Naive thymus-derived CD4-positive, alpha-beta T cell (primary cell): ENCODE measurements at regions of chr2 and their contacts with region 1.

Region 1: GRCh38 chr2:173965329-173966025 is at the start of gene SP3:
- DNase-seq: peak; percentile 88 to 97 (median 94)
- ATAC-seq: peak; percentile 75
- H3K4me3 ChIP-seq: peak within 1 kb of the TSS; percentile 88
- H3K4me3 Mint-ChIP-seq: peak within 1 kb of the TSS; percentile 91 to 99 (median 96)
- H3K27ac ChIP-seq: peak within 1 kb of the TSS; percentile 96
- H3K27ac Mint-ChIP-seq: peak within 1 kb of the TSS; percentile 97 to 100 (median 99)
- H3K4me1 ChIP-seq: peaks cover 13 to 25% of the 10 kb centered on the region in 2 donors
- H3K4me1 Mint-ChIP-seq: peaks cover 22 to 38% (median 31%) of the 10 kb centered on the region in 7 donors
- H3K27me3 ChIP-seq: no peaks in the 10 kb centered on the region
- H3K27me3 Mint-ChIP-seq: peaks cover 0 to 2% (median 0%) of the 10 kb centered on the region in 5 donors
- total RNA-seq, gene SP3: 108 to 158 (median 131) TPM

Region 2: DNA sequence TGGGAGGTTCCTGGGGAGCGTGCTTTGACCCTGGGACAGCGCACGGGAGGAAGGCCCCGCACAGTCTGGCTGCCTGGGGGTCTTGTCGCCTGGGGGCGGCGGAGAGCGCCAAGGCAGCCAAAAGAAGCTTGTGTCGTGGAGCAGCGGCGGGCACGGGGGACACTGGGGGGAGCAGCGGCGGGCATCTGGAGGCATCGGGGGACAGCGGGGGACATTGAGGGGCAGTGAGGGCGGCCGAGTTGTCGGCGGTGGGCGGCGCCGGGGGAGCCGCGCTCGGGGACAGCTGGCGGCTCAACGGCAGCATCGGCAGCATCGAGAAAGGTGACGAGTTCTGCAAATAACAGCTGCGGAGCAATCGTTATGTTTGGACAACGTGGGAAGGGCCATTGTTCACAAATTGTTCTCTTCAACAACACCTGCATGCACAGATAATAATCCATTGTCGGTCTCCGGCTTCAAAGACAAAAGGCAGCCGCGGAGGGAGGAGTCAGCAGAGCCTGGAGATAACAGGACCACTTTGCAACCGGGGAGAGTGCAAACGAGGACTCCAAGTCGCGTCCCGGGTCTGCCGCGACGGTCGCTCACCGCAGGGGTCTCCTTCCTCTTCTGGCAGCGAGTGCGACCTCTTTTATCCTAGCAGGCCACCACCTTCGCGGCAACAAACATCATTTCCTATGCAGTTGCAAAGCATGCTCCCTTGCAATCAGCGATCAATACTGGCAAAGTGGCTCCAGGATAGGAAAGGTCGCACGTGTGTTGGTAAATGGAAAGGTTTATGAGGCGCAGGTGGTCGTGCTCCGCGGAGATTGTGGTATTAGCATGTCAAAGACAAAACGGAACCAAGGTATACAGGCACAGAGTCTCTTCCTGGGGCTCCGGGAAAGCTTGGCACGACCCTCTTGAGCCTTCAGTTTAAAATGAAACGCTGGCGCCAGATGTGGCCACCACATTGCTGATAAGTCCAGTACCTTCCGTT is 1730.5 kb before region 1 on chr2:
- CTCF ChIA-PET with region 1: no interaction called
- POLR2A ChIA-PET with region 1: no interaction called
- intact Hi-C with region 1: loop called in 1 of 2 experiments (anchors 5 kb)
- DNase-seq: peak in 7 of 9 donors; percentile 18 to 51 (median 38)
- ATAC-seq: peak; percentile 68
- H3K4me3 ChIP-seq: peak overlapping the region; percentile 71
- H3K4me3 Mint-ChIP-seq: peak overlapping the region; percentile 82 to 97 (median 92)
- H3K27ac ChIP-seq: no peak overlapping the region
- H3K27ac Mint-ChIP-seq: peak overlapping the region in 6 of 9 donors; percentile 11 to 88 (median 60)
- H3K4me1 ChIP-seq: peaks cover 0 to 15% of the 10 kb centered on the region in 2 donors
- H3K4me1 Mint-ChIP-seq: peaks cover 14 to 25% (median 20%) of the 10 kb centered on the region in 7 donors
- H3K27me3 ChIP-seq: peaks cover 4 to 13% of the 10 kb centered on the region in 2 donors
- H3K27me3 Mint-ChIP-seq: peaks cover 4 to 72% (median 21%) of the 10 kb centered on the region in 5 donors

Region 3: DNA sequence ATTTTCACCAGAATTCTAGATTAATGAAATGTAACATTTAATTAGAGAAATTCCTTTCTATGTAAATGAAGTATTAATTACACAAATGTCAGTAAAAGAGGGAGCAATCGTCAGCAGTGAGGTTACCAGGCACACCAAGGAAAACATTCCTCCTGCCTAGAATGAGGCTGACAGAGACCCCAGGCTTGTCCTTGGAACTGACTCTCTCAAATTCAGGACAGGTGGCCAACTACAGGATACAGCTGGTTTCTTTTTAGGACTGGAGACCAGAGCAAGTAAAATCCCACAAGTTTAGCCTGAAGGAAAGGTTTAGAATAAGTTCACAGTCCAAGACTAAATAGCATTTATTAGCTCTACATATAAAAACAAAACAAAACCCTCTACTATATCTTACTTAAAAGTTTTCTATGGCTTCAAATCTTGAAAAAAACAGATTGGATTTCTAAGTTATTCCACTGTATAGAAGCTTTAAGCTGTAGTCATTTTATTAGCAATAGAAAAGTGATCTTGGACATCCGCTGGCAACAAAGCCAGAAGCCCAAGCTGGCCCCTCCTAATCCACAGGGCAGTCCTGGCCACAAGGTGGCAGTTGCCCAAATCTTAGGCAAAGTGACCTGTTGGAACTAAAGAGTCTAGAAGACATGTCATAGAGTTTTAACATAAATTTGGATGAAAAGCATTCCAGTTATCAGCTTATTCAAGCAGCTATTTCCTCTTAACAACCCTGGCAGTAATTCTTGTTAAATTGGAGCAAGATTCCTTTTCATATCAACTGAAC is 81.3 kb before region 1 on chr2:
- CTCF ChIA-PET with region 1: interaction called, 4 read pairs
- POLR2A ChIA-PET with region 1: interaction called, 3 read pairs
- intact Hi-C with region 1: loop called in 1 of 2 experiments (anchors 2 kb)
- DNase-seq: peak in 4 of 9 donors; percentile 13 to 24 (median 18)
- ATAC-seq: peak; percentile 62
- H3K4me3 ChIP-seq: no peak overlapping the region
- H3K4me3 Mint-ChIP-seq: no peak overlapping the region
- H3K27ac ChIP-seq: no peak overlapping the region
- H3K27ac Mint-ChIP-seq: no peak overlapping the region
- H3K4me1 ChIP-seq: no peaks in the 10 kb centered on the region
- H3K4me1 Mint-ChIP-seq: peaks cover 0 to 4% (median 0%) of the 10 kb centered on the region in 7 donors
- H3K27me3 ChIP-seq: no peaks in the 10 kb centered on the region
- H3K27me3 Mint-ChIP-seq: peaks cover 15 to 32% (median 24%) of the 10 kb centered on the region in 5 donors

Region 4: GRCh38 chr2:173896759-173897158 is 68.7 kb before region 1 on chr2:
- CTCF ChIA-PET with region 1: no interaction called
- POLR2A ChIA-PET with region 1: no interaction called
- intact Hi-C with region 1: no loop called
- DNase-seq: no peak
- ATAC-seq: no peak
- H3K4me3 ChIP-seq: no peak overlapping the region
- H3K4me3 Mint-ChIP-seq: no peak overlapping the region
- H3K27ac ChIP-seq: no peak overlapping the region
- H3K27ac Mint-ChIP-seq: peak overlapping the region in 1 of 9 donors; percentile 59
- H3K4me1 ChIP-seq: no peaks in the 10 kb centered on the region
- H3K4me1 Mint-ChIP-seq: peaks cover 6 to 26% (median 22%) of the 10 kb centered on the region in 7 donors
- H3K27me3 ChIP-seq: no peaks in the 10 kb centered on the region
- H3K27me3 Mint-ChIP-seq: peaks cover 0 to 2% (median 0%) of the 10 kb centered on the region in 5 donors

Region 5: DNA sequence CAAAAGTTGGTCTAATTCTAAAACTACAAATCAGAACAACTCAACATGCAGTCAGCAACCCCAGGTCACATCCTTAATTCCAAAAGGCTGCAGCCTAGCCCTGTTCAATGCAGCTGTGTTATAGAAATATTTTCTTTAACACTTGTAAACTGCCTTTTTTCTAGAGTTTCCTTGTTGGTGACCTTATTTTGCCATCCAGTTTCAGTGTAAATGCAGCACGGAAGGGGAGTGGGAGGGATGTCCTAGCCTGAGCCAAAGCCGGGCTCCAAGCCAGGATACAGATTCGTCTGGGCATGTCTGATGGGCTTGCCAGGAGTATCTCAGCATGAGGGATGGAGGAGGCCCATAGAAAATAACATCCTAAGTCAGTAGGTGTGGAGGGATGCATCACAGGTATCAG is 17.4 kb after region 1 on chr2:
- CTCF ChIA-PET with region 1: no interaction called
- POLR2A ChIA-PET with region 1: interaction called, 6 read pairs
- intact Hi-C with region 1: loop called in 1 of 2 experiments (anchors 2 kb)
- DNase-seq: no peak
- ATAC-seq: no peak
- H3K4me3 ChIP-seq: no peak overlapping the region
- H3K4me3 Mint-ChIP-seq: no peak overlapping the region
- H3K27ac ChIP-seq: no peak overlapping the region
- H3K27ac Mint-ChIP-seq: no peak overlapping the region
- H3K4me1 ChIP-seq: no peaks in the 10 kb centered on the region
- H3K4me1 Mint-ChIP-seq: peaks cover 6 to 19% (median 16%) of the 10 kb centered on the region in 7 donors
- H3K27me3 ChIP-seq: no peaks in the 10 kb centered on the region
- H3K27me3 Mint-ChIP-seq: peaks cover 0 to 4% (median 0%) of the 10 kb centered on the region in 5 donors

Region 6: GRCh38 chr2:174341286-174341994 is 376.0 kb after region 1 on chr2:
- CTCF ChIA-PET with region 1: no interaction called
- POLR2A ChIA-PET with region 1: no interaction called
- intact Hi-C with region 1: loop called in 1 of 2 experiments (anchors 2 kb)
- DNase-seq: peak; percentile 78 to 90 (median 86)
- ATAC-seq: peak; percentile 87
- H3K4me3 ChIP-seq: no peak overlapping the region
- H3K4me3 Mint-ChIP-seq: peak overlapping the region; percentile 66 to 86 (median 79)
- H3K27ac ChIP-seq: no peak overlapping the region
- H3K27ac Mint-ChIP-seq: peak overlapping the region in 8 of 9 donors; percentile 73 to 93 (median 87)
- H3K4me1 ChIP-seq: peaks cover 22 to 32% of the 10 kb centered on the region in 2 donors
- H3K4me1 Mint-ChIP-seq: peaks cover 15 to 53% (median 39%) of the 10 kb centered on the region in 7 donors
- H3K27me3 ChIP-seq: peaks cover 47 to 64% of the 10 kb centered on the region in 2 donors
- H3K27me3 Mint-ChIP-seq: peaks cover 49 to 78% (median 71%) of the 10 kb centered on the region in 5 donors

Region 7: GRCh38 chr2:174603280-174603679 is 637.8 kb after region 1 on chr2:
- CTCF ChIA-PET with region 1: no interaction called
- POLR2A ChIA-PET with region 1: no interaction called
- intact Hi-C with region 1: loop called (anchors 10 kb)
- DNase-seq: peak in 7 of 9 donors; percentile 47 to 67 (median 58)
- ATAC-seq: peak; percentile 79
- H3K4me3 ChIP-seq: no peak overlapping the region
- H3K4me3 Mint-ChIP-seq: peak overlapping the region in 8 of 10 donors; percentile 7 to 87 (median 26)
- H3K27ac ChIP-seq: peak overlapping the region; percentile 46
- H3K27ac Mint-ChIP-seq: peak overlapping the region; percentile 77 to 98 (median 93)
- H3K4me1 ChIP-seq: peaks cover 57 to 75% of the 10 kb centered on the region in 2 donors
- H3K4me1 Mint-ChIP-seq: peaks cover 70 to 97% (median 94%) of the 10 kb centered on the region in 7 donors
- H3K27me3 ChIP-seq: no peaks in the 10 kb centered on the region
- H3K27me3 Mint-ChIP-seq: no peaks in the 10 kb centered on the region